Left ventricle myocardium superior (tissue), 1 donor: ENCODE measurements at regions of chr15 and their contacts with region 1.

Region 1: DNA sequence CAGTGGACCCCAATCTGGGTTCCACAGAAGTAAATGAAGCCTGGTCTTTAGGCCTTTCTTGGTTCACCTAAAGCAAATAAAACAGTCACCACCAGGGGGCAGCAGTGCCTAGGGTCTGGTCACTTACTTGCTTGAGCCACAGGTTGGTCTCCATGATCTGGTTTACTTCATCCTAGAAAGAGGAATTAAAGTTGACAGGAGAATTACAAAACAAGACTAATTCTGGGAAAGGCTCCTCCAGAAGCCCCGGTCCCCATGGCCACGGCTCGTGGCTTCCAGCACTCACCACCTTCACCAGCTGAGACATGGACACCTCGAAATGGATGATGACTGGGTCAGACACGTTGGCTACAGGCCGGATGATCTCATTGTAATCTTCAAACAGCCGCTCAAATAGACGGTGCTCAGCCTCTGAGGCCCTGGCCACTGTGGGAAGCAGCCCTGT is 2.3 kb downstream of the CHRNA3 start:
- DNase-seq: peak; percentile 84
- ATAC-seq: peak; percentile 82

Region 2: GRCh38 chr15:78524230-78524629 is 94.3 kb before region 1 on chr15:
- intact Hi-C with region 1: no loop called
- DNase-seq: no peak
- ATAC-seq: no peak

Region 3: GRCh38 chr15:78552597-78552996 is 65.9 kb before region 1 on chr15:
- intact Hi-C with region 1: no loop called
- DNase-seq: no peak
- ATAC-seq: no peak

Region 4: GRCh38 chr15:78685159-78685921 is 66.8 kb after region 1 on chr15:
- intact Hi-C with region 1: no loop called
- DNase-seq: no peak
- ATAC-seq: no peak

Region 5: GRCh38 chr15:78709263-78709882 is 90.9 kb after region 1 on chr15:
- intact Hi-C with region 1: loop called (anchors 5 kb)
- DNase-seq: peak; percentile 81
- ATAC-seq: peak; percentile 96